ENCODE measurements at regions of chr18 and their contacts with region 1.

Region 1: DNA sequence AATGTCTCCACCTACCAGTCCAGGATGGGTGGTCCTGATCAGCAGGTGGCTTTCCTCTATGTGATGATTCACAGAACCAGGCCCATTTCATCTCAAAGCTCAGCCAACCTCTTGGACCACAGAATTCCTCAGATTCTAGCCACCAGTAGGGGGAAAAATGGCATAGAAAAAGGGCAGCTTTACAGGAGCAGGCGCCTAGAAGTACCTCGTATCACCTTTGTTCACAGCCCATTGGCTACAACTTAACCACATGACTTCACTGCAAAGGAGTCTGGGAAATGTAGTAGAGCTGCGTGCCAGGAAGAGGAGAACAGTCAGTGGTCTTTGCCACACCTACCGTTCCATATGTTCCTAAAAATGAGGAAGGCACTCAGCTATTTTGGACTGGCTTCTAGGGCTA is 62.8 kb upstream of the DTNA start:
- ATAC-seq: no peak
- H3K4me3 ChIP-seq: no peak overlapping the region
- H3K27ac ChIP-seq: no peak overlapping the region
- H3K4me1 ChIP-seq: peaks cover 0 to 6% of the 10 kb centered on the region in 2 donors

Region 2: GRCh38 chr18:34031814-34032213 is 615.4 kb before region 1 on chr18:
- in situ Hi-C with region 1: no loop called
- ATAC-seq: no peak
- H3K4me3 ChIP-seq: no peak overlapping the region
- H3K27ac ChIP-seq: no peak overlapping the region
- H3K4me1 ChIP-seq: no peaks in the 10 kb centered on the region

Region 3: GRCh38 chr18:34352385-34353163 is 294.7 kb before region 1 on chr18:
- in situ Hi-C with region 1: loop called in 1 of 9 experiments (anchors 25 kb)
- ATAC-seq: peak in 2 of 8 experiments; percentile 35 to 53
- H3K4me3 ChIP-seq: no peak overlapping the region
- H3K27ac ChIP-seq: no peak overlapping the region
- H3K4me1 ChIP-seq: no peaks in the 10 kb centered on the region

Region 4: GRCh38 chr18:35029770-35030169 is 382.5 kb after region 1 on chr18:
- in situ Hi-C with region 1: no loop called
- ATAC-seq: peak in 3 of 8 experiments; percentile 26 to 76 (median 76)
- H3K4me3 ChIP-seq: no peak overlapping the region
- H3K27ac ChIP-seq: no peak overlapping the region
- H3K4me1 ChIP-seq: peaks cover 0 to 4% of the 10 kb centered on the region in 2 donors

Measured in motor neuron (in vitro differentiated cells).